Prostate gland (tissue), 2 donors: ENCODE measurements at regions of chr4 and their contacts with region 1.

Region 1: DNA sequence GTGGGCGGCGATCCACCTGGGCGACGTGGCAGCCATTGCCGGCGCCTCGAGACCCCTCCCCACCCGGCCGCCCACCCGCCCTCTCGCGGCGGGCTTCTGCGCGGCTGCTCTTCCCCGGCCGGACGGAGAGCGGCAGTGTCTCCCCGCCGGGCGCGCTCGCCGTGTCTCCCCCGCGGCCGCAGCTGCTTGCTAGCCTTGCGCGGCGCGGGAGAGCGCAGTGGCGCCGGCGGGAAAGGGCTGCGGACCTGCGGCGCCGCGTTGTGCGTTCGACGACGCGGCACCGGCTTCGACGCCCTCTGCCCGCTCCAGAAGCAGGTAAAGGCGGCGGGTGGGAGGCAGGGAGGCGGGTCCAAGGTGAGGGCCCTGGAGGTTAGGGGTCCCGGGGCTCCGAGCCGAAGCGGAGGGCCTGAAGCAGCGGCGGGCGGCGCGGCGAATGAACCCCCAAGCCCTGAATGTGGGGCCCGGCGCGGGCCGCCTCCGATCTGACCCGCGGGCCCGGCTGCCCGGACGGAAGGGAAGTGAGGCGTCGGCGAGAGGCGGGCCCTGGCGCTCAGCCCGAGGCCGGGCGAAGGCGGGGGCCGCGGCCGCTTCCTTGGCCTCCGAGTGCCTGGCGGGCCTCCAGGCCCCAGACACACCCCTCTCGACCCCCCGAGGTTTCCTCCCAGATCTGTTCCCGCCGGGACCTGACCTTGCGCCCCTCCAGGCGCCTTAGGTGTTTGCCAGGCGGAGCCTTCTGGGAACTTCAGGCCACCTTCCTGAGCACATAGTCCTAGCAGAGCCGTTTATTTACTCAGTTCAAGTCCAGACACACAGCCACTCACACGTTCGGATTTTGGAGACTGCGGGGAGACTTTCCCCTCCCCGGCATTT is at the start of gene N4BP2:
- DNase-seq: peak; percentile 78
- H3K4me3 ChIP-seq: peak within 1 kb of the TSS; percentile 87 to 91
- H3K27ac ChIP-seq: peak within 1 kb of the TSS; percentile 99 to 100
- H3K4me1 ChIP-seq: peaks cover 4% of the 10 kb centered on the region
- H3K27me3 ChIP-seq: no peaks in the 10 kb centered on the region
- CTCF ChIP-seq: peak; percentile 80 to 96 (median 87)
- POLR2A ChIP-seq: peak; percentile 85
- total RNA-seq, gene N4BP2: 8.7 to 14.7 TPM

Region 2: GRCh38 chr4:39458505-39459300 is 598.2 kb before region 1 on chr4 and contains the starts of genes LIAS and RPL9:
- intact Hi-C with region 1: loop called (anchors 5 kb)
- DNase-seq: peak; percentile 95
- H3K4me3 ChIP-seq: peak within 1 kb of the TSS; percentile 68 to 75
- H3K27ac ChIP-seq: peak within 1 kb of the TSS; percentile 92 to 94
- H3K4me1 ChIP-seq: peaks cover 6% of the 10 kb centered on the region
- H3K27me3 ChIP-seq: no peaks in the 10 kb centered on the region
- CTCF ChIP-seq: no peak
- POLR2A ChIP-seq: peak; percentile 89
- total RNA-seq, gene LIAS: 11.2 to 15.3 TPM
- total RNA-seq, gene RPL9: 1,563 to 5,624 TPM

Region 3: DNA sequence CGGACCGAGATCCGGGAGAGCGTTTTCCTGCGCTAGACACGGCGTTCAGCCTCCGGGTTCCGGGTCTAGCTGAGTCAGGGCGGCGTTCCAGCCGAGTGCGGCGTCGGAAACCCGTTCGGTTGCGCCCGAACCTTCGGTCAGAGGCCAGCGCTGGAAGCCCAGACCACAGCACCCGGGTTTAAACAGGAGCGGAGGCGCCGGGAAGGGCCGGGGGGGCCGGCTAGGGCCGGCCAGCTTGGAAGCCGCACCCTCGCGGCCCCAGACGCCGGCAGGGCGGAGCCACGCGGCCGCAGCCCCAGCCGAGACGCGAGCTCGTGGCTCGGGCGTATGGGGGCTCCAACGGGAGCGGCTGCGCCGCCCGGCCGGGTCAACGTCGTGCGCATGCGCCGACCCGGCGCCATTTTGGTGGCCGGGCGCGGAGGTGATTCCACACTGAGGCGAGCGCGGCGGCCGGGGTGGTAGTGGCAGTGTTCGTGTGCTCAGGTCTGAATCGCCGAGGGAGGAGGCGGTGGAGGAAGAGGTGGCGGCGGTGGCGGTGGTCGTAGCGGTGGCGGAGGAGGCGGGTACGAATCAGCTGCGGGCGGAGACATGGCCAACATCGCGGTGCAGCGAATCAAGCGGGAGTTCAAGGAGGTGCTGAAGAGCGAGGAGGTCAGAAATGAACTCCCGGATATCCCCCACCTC is 359.1 kb before region 1 on chr4 and contains the start of gene UBE2K:
- intact Hi-C with region 1: loop called (anchors 5 kb)
- DNase-seq: peak; percentile 75
- H3K4me3 ChIP-seq: peak within 1 kb of the TSS; percentile 76 to 93
- H3K27ac ChIP-seq: peak within 1 kb of the TSS; percentile 95
- H3K4me1 ChIP-seq: no peaks in the 10 kb centered on the region
- H3K27me3 ChIP-seq: no peaks in the 10 kb centered on the region
- CTCF ChIP-seq: peak in 2 of 4 experiments; percentile 16 to 25
- POLR2A ChIP-seq: peak; percentile 79
- total RNA-seq, gene UBE2K: 25.6 to 30.3 TPM

Region 4: GRCh38 chr4:40309250-40309774 is 252.4 kb after region 1 on chr4:
- intact Hi-C with region 1: loop called (anchors 2 kb)
- DNase-seq: peak; percentile 92
- H3K4me3 ChIP-seq: no peak overlapping the region
- H3K27ac ChIP-seq: peak overlapping the region in 1 of 2 donors; percentile 19
- H3K4me1 ChIP-seq: no peaks in the 10 kb centered on the region
- H3K27me3 ChIP-seq: no peaks in the 10 kb centered on the region
- CTCF ChIP-seq: peak; percentile 75 to 92 (median 89)
- POLR2A ChIP-seq: no peak